ENCODE measurements at regions of chr16 and their contacts with region 1.

Region 1: DNA sequence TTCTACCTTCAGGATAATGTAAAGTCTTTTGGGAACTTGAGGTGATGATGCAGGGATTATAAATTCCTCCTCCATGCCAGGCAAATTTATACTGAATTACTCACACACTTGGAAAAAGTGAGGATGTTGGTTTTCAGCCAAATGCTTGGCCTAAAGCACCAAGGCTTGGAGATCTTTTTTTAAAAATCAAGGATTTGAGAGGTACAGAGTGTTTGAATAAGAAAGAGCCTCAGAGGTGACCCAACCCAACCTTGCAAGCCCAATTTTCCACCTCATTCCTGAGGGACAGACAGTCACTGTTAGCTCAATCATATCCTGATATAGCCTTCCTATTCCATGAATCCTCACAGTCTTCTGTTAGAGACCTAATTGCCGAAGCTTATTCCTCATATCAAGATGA is 14.0 kb downstream of the GRIN2A start:
- DNase-seq: no peak
- ATAC-seq: peak; percentile 60
- H3K4me3 ChIP-seq: no peak overlapping the region
- H3K27ac ChIP-seq: peak overlapping the region in 1 of 2 donors; percentile 84
- H3K4me1 ChIP-seq: no peaks in the 10 kb centered on the region
- H3K27me3 ChIP-seq: no peaks in the 10 kb centered on the region

Region 2: GRCh38 chr16:10088380-10088793 is 79.9 kb before region 1 on chr16:
- intact Hi-C with region 1: loop called in 1 of 2 experiments (anchors 5 kb)
- DNase-seq: peak in 1 of 2 donors; percentile 48
- ATAC-seq: peak; percentile 72
- H3K4me3 ChIP-seq: no peak overlapping the region
- H3K27ac ChIP-seq: no peak overlapping the region
- H3K4me1 ChIP-seq: no peaks in the 10 kb centered on the region
- H3K27me3 ChIP-seq: no peaks in the 10 kb centered on the region

Region 3: GRCh38 chr16:10122546-10122945 is 45.7 kb before region 1 on chr16:
- intact Hi-C with region 1: loop called in 1 of 2 experiments (anchors 5 kb)
- DNase-seq: no peak
- ATAC-seq: no peak
- H3K4me3 ChIP-seq: no peak overlapping the region
- H3K27ac ChIP-seq: no peak overlapping the region
- H3K4me1 ChIP-seq: peaks cover 0 to 2% of the 10 kb centered on the region in 2 donors
- H3K27me3 ChIP-seq: no peaks in the 10 kb centered on the region

Region 4: DNA sequence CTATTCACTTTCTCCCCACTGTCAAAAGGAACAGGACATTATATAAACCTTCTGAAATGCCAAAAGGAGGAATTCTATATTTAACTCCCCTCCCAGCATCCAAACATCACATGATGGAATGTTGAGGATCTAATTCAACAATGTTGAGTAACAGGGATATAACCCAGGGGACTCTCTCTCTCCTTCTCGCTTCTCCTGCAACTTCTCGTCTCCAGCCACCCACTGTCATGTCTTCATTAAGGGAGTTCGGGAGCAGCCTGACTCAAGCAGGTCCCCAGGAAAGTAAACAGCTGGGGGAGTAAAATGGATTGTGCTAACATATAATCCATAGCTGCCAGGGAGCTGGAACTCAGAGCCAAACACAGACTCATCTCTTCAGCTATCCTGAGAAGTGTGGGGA is 37.7 kb before region 1 on chr16:
- intact Hi-C with region 1: loop called (anchors 5 kb)
- DNase-seq: no peak
- ATAC-seq: no peak
- H3K4me3 ChIP-seq: no peak overlapping the region
- H3K27ac ChIP-seq: peak overlapping the region in 1 of 2 donors; percentile 76
- H3K4me1 ChIP-seq: no peaks in the 10 kb centered on the region
- H3K27me3 ChIP-seq: peaks cover 0 to 1% of the 10 kb centered on the region in 2 donors